BJ (cell line): ENCODE measurements at regions of chr13 and their contacts with region 1.

Region 1: GRCh38 chr13:78137404-78138142 is 218.9 kb upstream of the EDNRB start:
- DNase-seq: no peak
- H3K4me3 ChIP-seq: no peak overlapping the region
- H3K27me3 ChIP-seq: no peaks in the 10 kb centered on the region
- CTCF ChIP-seq: peak; percentile 76

Region 2: DNA sequence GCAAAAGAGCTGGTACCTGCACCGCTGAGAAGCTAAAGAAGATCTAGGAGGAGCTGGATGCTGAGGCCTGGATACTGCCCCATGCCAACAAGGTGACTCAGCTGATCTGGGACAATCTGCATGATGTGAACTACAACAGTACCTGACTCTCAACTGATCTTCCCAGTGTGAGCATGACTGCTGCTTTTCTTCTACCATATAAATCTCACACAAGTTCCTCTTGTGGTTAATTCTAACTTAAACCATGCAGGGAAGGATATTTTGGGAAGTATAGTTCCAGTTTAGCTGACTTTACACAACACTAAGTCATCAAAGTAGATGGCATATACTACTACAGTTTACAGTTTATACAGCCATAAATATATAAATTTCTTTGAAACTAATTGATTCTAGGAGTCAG is 348.2 kb before region 1 on chr13:
- CTCF ChIA-PET with region 1: no interaction called
- POLR2A ChIA-PET with region 1: no interaction called
- DNase-seq: no peak
- H3K4me3 ChIP-seq: no peak overlapping the region
- H3K27me3 ChIP-seq: no peaks in the 10 kb centered on the region
- CTCF ChIP-seq: no peak

Region 3: GRCh38 chr13:78147905-78148304 is 10.3 kb after region 1 on chr13:
- CTCF ChIA-PET with region 1: interaction called, 16 read pairs
- POLR2A ChIA-PET with region 1: no interaction called
- DNase-seq: peak; percentile 39
- H3K4me3 ChIP-seq: no peak overlapping the region
- H3K27me3 ChIP-seq: no peaks in the 10 kb centered on the region
- CTCF ChIP-seq: no peak

Region 4: GRCh38 chr13:78241278-78241919 is 103.8 kb after region 1 on chr13:
- CTCF ChIA-PET with region 1: interaction called, 12 read pairs
- POLR2A ChIA-PET with region 1: no interaction called
- DNase-seq: no peak
- H3K4me3 ChIP-seq: no peak overlapping the region
- H3K27me3 ChIP-seq: no peaks in the 10 kb centered on the region
- CTCF ChIP-seq: peak; percentile 67